GM12878 (cell line): ENCODE measurements at regions of chr17 and their contacts with region 1.

Region 1: DNA sequence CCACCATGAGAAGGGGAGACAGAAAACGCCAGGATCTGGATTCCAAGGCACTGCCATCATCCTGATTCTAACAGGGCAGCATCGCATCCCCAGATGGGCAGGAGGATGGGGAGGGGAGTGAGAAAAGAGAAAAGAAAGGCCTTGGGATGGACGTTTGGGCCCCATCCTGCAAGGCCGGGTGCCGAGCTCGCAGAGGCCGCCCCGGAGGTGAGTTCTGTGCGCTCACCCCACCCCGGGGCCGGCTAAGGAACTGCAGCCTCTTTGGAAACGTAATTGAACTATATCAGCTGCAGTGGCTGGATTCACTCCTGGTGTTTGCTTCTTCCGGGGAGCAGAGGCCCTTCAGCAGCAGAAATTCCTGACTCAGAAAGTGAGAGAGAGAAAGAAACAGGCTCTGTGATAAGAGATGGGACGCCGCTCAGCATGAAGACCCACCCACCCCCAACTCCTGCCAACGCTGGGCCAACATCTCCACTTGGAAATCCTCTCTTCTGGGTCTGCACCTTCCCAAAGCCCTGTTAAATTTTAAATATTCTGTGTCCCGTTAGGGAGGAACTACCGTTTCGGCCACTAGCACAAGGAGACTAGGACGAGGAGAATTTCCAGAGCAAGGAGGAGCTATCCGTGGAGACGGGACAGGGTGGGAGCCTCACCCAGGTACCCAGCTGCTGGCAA is 8.5 kb upstream of the SSTR2 start:
- DNase-seq: no peak
- ATAC-seq: peak; percentile 91
- H3K4me3 ChIP-seq: peak overlapping the region; percentile 39; the same call in 1 of the 2 replicates
- H3K27ac ChIP-seq: peak overlapping the region; percentile 80
- H3K4me1 ChIP-seq: peaks cover 40% of the 10 kb centered on the region
- H3K27me3 ChIP-seq: no peaks in the 10 kb centered on the region
- CTCF ChIP-seq: peak; percentile 87 to 88 (median 87)
- EP300 ChIP-seq: no peak
- POLR2A ChIP-seq: no peak
- RAD21 ChIP-seq: peak; percentile 73

Region 2: GRCh38 chr17:72931163-72931562 is 225.1 kb before region 1 on chr17:
- CTCF ChIA-PET with region 1: interaction called, 3 read pairs
- POLR2A ChIA-PET with region 1: interaction called, 9 read pairs
- RAD21 ChIA-PET with region 1: interaction called, 15 read pairs
- SMC1A ChIA-PET with region 1: interaction called, 5 read pairs
- in situ Hi-C with region 1: no loop called
- intact Hi-C with region 1: no loop called
- DNase-seq: peak; percentile 25
- ATAC-seq: peak; percentile 68
- H3K4me3 ChIP-seq: no peak overlapping the region
- H3K27ac ChIP-seq: no peak overlapping the region
- H3K4me1 ChIP-seq: peaks cover 6% of the 10 kb centered on the region; the same call in 1 of the 2 replicates
- H3K27me3 ChIP-seq: no peaks in the 10 kb centered on the region
- CTCF ChIP-seq: no peak
- EP300 ChIP-seq: no peak
- POLR2A ChIP-seq: no peak
- RAD21 ChIP-seq: no peak

Region 3: DNA sequence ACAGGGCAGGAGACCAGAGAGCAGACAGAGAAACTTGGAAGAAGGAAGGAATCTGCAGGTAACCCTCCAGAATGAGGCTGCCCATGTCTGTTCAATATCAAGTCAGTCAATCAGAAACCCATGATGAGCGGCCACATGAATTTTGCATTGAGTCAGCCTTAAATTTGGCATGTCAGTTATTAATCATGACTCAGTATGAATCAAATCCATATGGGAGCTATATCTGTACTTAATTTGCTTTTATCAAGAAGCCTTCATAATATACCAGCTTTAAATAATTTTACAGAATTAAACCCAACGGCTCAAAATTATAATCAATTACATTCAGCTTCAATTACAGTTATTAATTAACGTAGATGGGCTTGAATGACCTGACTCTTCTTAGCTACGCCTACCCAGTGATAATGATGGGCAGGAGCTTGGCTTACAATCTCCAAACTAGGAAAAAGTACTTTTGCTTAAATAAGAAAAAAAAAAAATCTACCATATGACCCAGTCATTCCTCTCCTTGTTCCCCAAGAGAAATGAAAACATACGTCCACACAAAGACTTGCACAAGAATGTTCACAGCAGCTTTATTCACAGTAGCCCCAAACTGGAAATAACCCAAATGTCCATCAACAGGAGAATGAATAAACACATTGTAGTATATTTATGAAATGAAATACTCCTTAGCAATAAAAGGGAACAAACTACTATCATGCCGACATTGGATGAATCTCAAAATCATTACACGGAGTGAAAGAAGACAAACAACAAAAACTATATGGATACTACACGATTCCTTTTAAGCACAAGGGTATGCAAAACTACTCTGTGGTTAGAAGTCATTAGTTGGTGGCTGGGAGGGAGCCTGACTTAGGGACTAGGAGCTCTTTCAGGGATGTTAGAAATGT is 112.4 kb before region 1 on chr17:
- CTCF ChIA-PET with region 1: interaction called, 8 read pairs
- POLR2A ChIA-PET with region 1: interaction called, 3 read pairs
- RAD21 ChIA-PET with region 1: interaction called, 4 read pairs
- SMC1A ChIA-PET with region 1: interaction called, 11 read pairs
- in situ Hi-C with region 1: no loop called
- intact Hi-C with region 1: loop called (anchors 5 kb)
- DNase-seq: no peak
- ATAC-seq: peak; percentile 64
- H3K4me3 ChIP-seq: no peak overlapping the region
- H3K27ac ChIP-seq: peak overlapping the region; percentile 31; the same call in 1 of the 2 replicates
- H3K4me1 ChIP-seq: peaks cover 7% of the 10 kb centered on the region
- H3K27me3 ChIP-seq: no peaks in the 10 kb centered on the region
- CTCF ChIP-seq: no peak
- EP300 ChIP-seq: no peak
- POLR2A ChIP-seq: no peak
- RAD21 ChIP-seq: no peak

Region 4: GRCh38 chr17:73092523-73093135 is 63.7 kb before region 1 on chr17 and contains the start of gene SLC39A11:
- CTCF ChIA-PET with region 1: interaction called, 7 read pairs
- POLR2A ChIA-PET with region 1: no interaction called
- RAD21 ChIA-PET with region 1: interaction called, 6 read pairs
- SMC1A ChIA-PET with region 1: interaction called, 3 read pairs
- in situ Hi-C with region 1: no loop called
- intact Hi-C with region 1: loop called (anchors 5 kb)
- DNase-seq: peak; percentile 67
- ATAC-seq: peak; percentile 98
- H3K4me3 ChIP-seq: peak within 1 kb of the TSS; percentile 99
- H3K27ac ChIP-seq: peak within 1 kb of the TSS; percentile 68
- H3K4me1 ChIP-seq: peaks cover 7% of the 10 kb centered on the region; the same call in 1 of the 2 replicates
- H3K27me3 ChIP-seq: no peaks in the 10 kb centered on the region
- CTCF ChIP-seq: no peak
- EP300 ChIP-seq: no peak
- POLR2A ChIP-seq: peak; percentile 94
- RAD21 ChIP-seq: no peak
- polyA plus RNA-seq, gene SLC39A11: 8.6 to 11.7 TPM

Region 5: GRCh38 chr17:73166731-73167581 is 10.7 kb after region 1 on chr17:
- CTCF ChIA-PET with region 1: interaction called, 32 read pairs
- POLR2A ChIA-PET with region 1: interaction called, 19 read pairs
- RAD21 ChIA-PET with region 1: interaction called, 54 read pairs
- SMC1A ChIA-PET with region 1: interaction called, 35 read pairs
- in situ Hi-C with region 1: no loop called
- intact Hi-C with region 1: no loop called
- DNase-seq: no peak
- ATAC-seq: peak; percentile 71
- H3K4me3 ChIP-seq: peak overlapping the region; percentile 82
- H3K27ac ChIP-seq: peak overlapping the region; percentile 51
- H3K4me1 ChIP-seq: peaks cover 34% of the 10 kb centered on the region
- H3K27me3 ChIP-seq: 0 out of 4 replicates have a peak, but pooled peaks cover 0 to 3% of the 10 kb centered on the region in 2 experiments
- CTCF ChIP-seq: no peak
- EP300 ChIP-seq: peak in 1 of 2 experiments; percentile 30; a peak in 1 of 4 replicates
- POLR2A ChIP-seq: no peak
- RAD21 ChIP-seq: no peak